MCF 10A (cell line): ENCODE measurements at regions of chr17 and their contacts with region 1.

Region 1: GRCh38 chr17:80454557-80455335 is 21.7 kb downstream of the NPTX1 start:
- DNase-seq: peak; percentile 94
- H3K4me3 Mint-ChIP-seq: peak overlapping the region; percentile 92
- H3K27ac Mint-ChIP-seq: peak overlapping the region; percentile 99
- H3K4me1 Mint-ChIP-seq: peaks cover 9% of the 10 kb centered on the region
- H3K27me3 Mint-ChIP-seq: no peaks in the 10 kb centered on the region
- CTCF ChIP-seq: no peak

Region 2: DNA sequence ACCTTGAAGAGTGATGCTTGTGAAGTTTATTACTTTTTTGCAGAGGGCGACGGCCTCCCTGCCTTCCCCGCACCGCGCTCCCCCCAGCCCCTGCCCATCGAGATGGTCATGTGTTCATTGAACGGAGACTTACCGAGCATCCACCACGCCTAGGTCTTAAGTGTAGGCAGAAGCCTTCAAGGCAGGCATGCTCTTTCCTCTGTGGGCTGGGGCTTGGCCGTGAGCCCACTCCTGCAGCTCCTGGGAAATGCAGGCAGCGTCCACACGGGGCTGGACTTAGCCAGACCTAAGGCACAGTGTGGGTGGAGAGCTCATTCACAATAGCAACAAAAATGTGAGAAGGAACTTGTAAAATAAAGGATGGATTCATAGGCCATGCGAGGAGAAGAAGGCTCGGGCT is 174.9 kb before region 1 on chr17:
- CTCF ChIA-PET with region 1: no interaction called
- POLR2A ChIA-PET with region 1: no interaction called
- intact Hi-C with region 1: no loop called
- DNase-seq: peak; percentile 90
- H3K4me3 Mint-ChIP-seq: peak overlapping the region; percentile 72
- H3K27ac Mint-ChIP-seq: peak overlapping the region; percentile 19
- H3K4me1 Mint-ChIP-seq: peaks cover 35% of the 10 kb centered on the region
- H3K27me3 Mint-ChIP-seq: no peaks in the 10 kb centered on the region
- CTCF ChIP-seq: no peak

Region 3: DNA sequence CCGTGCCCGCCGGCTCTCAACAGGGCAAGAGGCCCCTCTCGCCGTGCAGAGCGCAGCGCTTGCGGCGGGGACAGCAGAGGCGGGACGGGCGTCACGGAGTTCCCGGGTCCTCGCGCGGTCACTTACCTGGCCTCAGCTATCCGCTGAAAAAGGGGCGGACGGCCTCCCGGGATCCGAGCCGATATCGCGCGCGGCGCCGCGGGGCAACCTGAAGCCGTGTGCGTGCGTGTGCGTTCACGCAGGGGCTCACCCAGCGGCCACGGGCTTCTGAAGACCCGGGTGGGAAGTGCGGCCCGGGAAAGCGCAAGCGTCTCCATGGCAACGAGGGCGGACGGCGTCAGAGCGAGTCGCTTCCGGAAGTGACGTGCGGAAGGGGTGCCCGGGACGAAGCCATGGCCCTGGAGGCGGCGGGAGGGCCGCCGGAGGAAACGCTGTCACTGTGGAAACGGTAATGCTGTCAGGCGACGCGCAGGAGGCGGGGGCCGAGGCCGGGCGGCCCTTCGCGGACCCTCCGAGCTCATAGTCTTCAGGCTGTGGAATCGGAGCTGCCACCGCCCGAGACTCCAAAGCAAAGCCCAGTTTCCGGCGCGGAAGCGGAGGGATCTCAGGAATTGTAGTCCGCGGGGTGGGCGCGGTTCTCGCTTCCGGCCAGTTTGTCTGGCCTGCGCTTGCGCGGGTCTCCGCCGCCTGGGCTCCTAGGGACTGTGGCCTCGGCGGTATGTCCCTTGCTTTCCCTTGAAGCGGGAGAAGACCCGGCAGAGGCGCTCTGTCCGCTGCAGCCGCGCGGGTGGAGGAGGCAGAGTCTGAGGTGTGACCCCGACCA is 39.7 kb before region 1 on chr17 and contains the start of gene ENDOV:
- CTCF ChIA-PET with region 1: no interaction called
- POLR2A ChIA-PET with region 1: interaction called, 17 read pairs
- intact Hi-C with region 1: no loop called
- DNase-seq: peak; percentile 92
- H3K4me3 Mint-ChIP-seq: peak within 1 kb of the TSS; percentile 72
- H3K27ac Mint-ChIP-seq: peak within 1 kb of the TSS; percentile 96
- H3K4me1 Mint-ChIP-seq: peaks cover 30% of the 10 kb centered on the region
- H3K27me3 Mint-ChIP-seq: no peaks in the 10 kb centered on the region
- CTCF ChIP-seq: no peak
- total RNA-seq, gene ENDOV: 28.0 and 34.4 TPM in 2 replicates

Region 4: DNA sequence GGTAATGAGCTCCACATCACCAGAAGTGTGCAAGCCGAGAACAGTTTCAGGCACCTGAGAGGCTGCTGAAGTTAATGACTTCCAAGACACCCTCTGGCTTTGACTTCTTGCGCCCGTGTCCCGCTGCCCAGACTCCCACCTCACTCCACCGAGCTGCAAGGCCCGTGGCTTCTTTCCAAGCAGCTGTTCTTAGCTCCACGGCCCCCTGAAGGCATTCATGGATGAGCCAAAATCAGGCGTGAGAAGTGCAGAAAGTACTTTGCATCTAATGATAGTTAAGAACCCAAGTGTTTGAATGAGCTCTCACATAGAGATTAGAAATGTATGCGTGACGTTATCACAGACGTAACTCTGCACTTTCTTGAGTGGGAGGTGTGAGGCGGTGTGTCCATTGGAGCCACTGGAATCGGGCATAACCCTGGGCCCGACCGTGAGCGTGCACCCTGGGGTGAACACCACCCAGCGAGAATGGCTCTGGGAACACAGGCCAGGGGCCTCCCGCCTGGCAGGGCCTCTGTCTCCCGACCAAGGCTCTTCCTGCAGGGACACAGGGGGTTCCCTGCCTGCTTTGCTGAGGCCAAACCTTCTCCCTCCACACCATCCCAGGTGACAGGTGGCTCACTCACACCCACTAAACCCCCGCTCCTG is 10.7 kb after region 1 on chr17:
- CTCF ChIA-PET with region 1: no interaction called
- POLR2A ChIA-PET with region 1: interaction called, 13 read pairs
- intact Hi-C with region 1: no loop called
- DNase-seq: no peak
- H3K4me3 Mint-ChIP-seq: no peak overlapping the region
- H3K27ac Mint-ChIP-seq: no peak overlapping the region
- H3K4me1 Mint-ChIP-seq: no peaks in the 10 kb centered on the region
- H3K27me3 Mint-ChIP-seq: peaks cover 66% of the 10 kb centered on the region
- CTCF ChIP-seq: no peak

Region 5: GRCh38 chr17:80501740-80502577 is 47.2 kb after region 1 on chr17:
- CTCF ChIA-PET with region 1: no interaction called
- POLR2A ChIA-PET with region 1: interaction called, 17 read pairs
- intact Hi-C with region 1: no loop called
- DNase-seq: peak; percentile 90
- H3K4me3 Mint-ChIP-seq: peak overlapping the region; percentile 68
- H3K27ac Mint-ChIP-seq: peak overlapping the region; percentile 89
- H3K4me1 Mint-ChIP-seq: peaks cover 12% of the 10 kb centered on the region
- H3K27me3 Mint-ChIP-seq: no peaks in the 10 kb centered on the region
- CTCF ChIP-seq: no peak

Region 6: GRCh38 chr17:80544655-80545498 is 90.1 kb after region 1 on chr17 and contains the start of gene RPTOR:
- CTCF ChIA-PET with region 1: no interaction called
- POLR2A ChIA-PET with region 1: interaction called, 16 read pairs
- intact Hi-C with region 1: no loop called
- DNase-seq: peak; percentile 87
- H3K4me3 Mint-ChIP-seq: peak within 1 kb of the TSS; percentile 82
- H3K27ac Mint-ChIP-seq: peak within 1 kb of the TSS; percentile 90
- H3K4me1 Mint-ChIP-seq: peaks cover 21% of the 10 kb centered on the region
- H3K27me3 Mint-ChIP-seq: no peaks in the 10 kb centered on the region
- CTCF ChIP-seq: no peak
- total RNA-seq, gene RPTOR: 41.3 and 46.6 TPM in 2 replicates

Region 7: GRCh38 chr17:80673152-80673920 is 218.6 kb after region 1 on chr17:
- CTCF ChIA-PET with region 1: no interaction called
- POLR2A ChIA-PET with region 1: no interaction called
- intact Hi-C with region 1: no loop called
- DNase-seq: no peak
- H3K4me3 Mint-ChIP-seq: no peak overlapping the region
- H3K27ac Mint-ChIP-seq: no peak overlapping the region
- H3K4me1 Mint-ChIP-seq: peaks cover 15% of the 10 kb centered on the region
- H3K27me3 Mint-ChIP-seq: no peaks in the 10 kb centered on the region
- CTCF ChIP-seq: no peak

Region 8: DNA sequence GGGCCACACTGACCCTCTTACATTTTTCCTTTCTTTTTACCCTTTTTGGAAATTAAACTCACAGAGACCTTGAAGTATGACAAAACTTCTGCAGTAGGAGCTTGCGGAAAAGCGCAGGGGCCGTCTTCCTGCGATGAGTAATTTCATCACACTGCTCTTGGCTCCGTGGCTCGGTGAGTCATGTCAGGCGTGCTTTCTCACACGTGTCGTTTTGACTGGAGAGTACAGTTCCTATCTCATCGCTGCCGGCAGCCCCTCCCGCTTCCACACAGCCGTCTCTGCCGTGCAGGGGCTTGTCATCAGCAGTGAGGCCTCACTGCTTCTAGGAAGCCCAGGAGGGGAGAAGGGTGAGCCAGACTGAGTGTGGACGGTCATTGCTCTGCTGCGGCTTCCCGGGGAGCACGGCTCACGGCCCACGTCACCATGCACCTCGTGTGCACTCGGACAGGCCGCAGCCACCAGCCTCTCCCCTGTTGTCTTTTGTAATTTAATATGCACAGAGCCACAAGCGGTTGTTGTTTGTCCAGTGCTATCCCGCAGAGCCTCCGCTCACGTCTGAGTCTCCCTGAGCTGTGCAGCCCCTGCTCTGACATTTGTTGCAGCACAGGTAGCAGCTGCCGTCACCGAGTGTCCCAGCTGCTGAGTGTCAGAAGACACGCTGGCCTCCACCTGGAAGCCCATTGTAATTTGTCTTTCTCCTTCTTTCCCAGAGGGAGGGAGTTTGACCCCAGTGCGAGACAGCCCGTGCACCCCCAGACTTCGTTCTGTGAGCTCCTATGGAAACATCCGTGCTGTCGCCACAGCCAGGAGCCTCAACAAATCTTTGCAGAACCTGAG is 437.5 kb after region 1 on chr17:
- CTCF ChIA-PET with region 1: interaction called, 4 read pairs
- POLR2A ChIA-PET with region 1: interaction called, 17 read pairs
- intact Hi-C with region 1: no loop called
- DNase-seq: peak; percentile 98
- H3K4me3 Mint-ChIP-seq: peak overlapping the region; percentile 62
- H3K27ac Mint-ChIP-seq: peak overlapping the region; percentile 92
- H3K4me1 Mint-ChIP-seq: peaks cover 31% of the 10 kb centered on the region
- H3K27me3 Mint-ChIP-seq: no peaks in the 10 kb centered on the region
- CTCF ChIP-seq: peak; percentile 32

Region 9: DNA sequence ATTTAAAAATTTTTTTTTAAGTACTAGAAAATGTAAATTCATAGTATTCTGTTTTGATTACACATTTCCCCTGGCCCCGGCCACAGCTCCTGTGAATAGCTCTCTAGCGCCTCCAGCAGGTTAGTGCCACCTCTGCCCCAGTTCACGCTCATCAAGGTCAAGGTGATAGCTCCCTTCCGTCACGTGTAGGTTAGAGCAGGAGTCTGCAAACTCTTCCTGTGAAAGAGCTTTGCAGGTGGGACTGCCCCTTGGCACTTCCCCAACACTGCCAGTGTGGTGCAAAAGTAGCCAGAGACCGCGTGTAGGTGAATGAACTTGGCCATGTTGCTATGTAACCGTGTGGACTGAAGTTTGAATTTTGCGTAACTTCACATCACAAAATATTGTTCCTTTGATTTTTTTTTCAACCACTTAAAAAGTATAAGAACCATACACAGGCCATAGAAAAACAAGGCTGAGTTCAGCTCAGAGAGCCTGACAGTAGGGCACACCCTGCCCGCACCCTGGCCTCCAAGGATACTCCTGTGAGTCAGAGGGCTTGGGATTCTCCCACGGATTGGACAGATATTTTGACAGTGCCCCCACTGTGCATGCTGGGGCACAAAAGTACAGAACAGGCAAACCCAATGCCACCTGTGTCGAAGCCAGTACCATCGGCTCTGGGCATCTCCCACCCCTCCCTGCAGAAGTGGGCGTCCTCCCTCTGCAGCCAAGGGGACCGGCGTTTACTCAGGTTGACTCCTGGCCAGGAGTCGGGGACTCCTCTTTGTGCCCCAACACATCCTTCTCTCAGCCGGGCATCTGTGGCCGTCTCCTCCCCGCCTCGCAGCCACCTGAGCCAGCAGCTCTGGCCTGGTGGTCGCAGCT is 444.9 kb after region 1 on chr17:
- CTCF ChIA-PET with region 1: no interaction called
- POLR2A ChIA-PET with region 1: interaction called, 19 read pairs
- intact Hi-C with region 1: no loop called
- DNase-seq: peak; percentile 85
- H3K4me3 Mint-ChIP-seq: peak overlapping the region; percentile 12
- H3K27ac Mint-ChIP-seq: peak overlapping the region; percentile 39
- H3K4me1 Mint-ChIP-seq: peaks cover 36% of the 10 kb centered on the region
- H3K27me3 Mint-ChIP-seq: no peaks in the 10 kb centered on the region
- CTCF ChIP-seq: peak; percentile 88